T-cell (primary cell): ENCODE measurements at regions of chrX and their contacts with region 1.

Region 1: DNA sequence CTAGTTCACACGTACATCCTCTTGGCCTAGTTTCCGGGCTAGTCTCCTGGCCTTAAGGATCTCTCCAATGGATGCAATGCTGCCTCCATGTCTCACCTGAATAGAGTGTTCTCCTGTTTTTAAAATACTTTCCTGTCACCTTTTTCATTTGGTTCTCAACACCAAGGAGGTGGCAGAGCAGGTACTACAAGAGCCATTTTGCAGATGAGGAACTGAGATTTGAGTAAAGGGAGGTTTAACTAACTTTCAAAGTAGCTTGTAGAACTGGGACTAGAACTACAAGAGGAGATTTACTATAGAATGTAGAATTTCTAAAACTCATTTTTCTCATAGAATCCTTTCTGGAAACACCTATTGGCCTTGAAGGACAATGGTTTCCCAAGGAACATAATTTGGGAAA is 97.6 kb upstream of the AP1S2 start:
- DNase-seq: no peak
- ATAC-seq: no peak
- H3K4me3 ChIP-seq: no peak overlapping the region
- H3K4me3 Mint-ChIP-seq: no peak overlapping the region
- H3K27ac ChIP-seq: no peak overlapping the region
- H3K27ac Mint-ChIP-seq: no peak overlapping the region
- H3K4me1 ChIP-seq: no peaks in the 10 kb centered on the region
- H3K4me1 Mint-ChIP-seq: no peaks in the 10 kb centered on the region
- H3K27me3 ChIP-seq: no peaks in the 10 kb centered on the region
- H3K27me3 Mint-ChIP-seq: peaks cover 1 to 17% of the 10 kb centered on the region in 2 donors

Region 2: DNA sequence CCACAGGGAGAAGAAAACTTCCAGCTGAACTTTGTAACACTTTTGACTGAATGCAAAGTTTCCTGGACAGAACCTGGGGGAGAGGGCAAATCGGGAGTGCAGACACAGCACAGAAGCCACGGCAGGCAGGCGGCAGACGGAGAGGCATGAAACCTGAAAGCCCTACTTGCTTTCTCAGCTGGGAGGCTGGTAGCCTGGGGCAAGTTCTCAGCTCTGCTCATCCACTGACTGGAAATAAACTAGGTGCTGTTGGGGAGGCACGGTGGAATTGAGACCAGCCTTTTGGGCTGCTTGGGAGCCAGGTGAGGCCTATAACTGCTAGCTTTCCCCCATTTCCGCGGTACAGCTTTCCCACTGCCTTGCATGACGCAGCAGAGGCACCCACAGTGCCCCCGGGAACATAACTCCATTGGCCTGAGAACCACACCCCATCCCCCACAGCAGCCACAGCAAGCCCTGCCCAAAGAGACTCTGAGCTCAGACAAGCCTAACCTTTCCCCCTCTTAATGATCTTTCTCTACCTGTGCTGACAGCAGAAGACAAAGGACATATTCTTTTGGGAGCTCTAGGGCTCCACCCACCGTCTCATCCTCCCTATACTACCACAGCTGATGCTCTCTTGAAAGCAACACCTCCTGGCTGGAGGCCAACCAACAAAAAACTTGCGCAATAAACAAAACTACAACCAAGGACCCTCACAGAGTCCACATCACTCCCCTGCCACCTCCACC is 1194.3 kb before region 1 on chrX:
- CTCF ChIA-PET with region 1: no interaction called
- POLR2A ChIA-PET with region 1: no interaction called
- DNase-seq: no peak
- ATAC-seq: no peak
- H3K4me3 ChIP-seq: no peak overlapping the region
- H3K4me3 Mint-ChIP-seq: no peak overlapping the region
- H3K27ac ChIP-seq: no peak overlapping the region
- H3K27ac Mint-ChIP-seq: no peak overlapping the region
- H3K4me1 ChIP-seq: no peaks in the 10 kb centered on the region
- H3K4me1 Mint-ChIP-seq: no peaks in the 10 kb centered on the region
- H3K27me3 ChIP-seq: no peaks in the 10 kb centered on the region
- H3K27me3 Mint-ChIP-seq: peaks cover 0 to 3% of the 10 kb centered on the region in 2 donors

Region 3: DNA sequence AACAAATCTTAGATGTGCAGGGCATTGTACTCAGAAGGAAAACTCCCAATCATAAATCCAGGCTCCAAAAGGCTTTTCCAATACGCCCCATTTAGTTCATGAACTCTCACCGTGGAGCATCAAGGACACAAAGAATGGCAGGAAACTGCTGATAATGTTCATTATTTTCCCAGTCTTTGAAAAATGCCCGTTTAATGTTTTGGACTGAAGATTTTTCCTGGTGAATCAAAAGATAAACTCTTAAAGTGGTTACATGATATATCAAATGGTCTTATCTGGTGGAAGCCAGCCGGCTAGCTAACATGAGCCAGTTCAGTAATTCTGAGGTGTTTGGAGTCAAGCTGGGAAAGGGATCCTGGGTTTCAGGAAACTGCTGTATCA is 35.5 kb before region 1 on chrX:
- CTCF ChIA-PET with region 1: no interaction called
- POLR2A ChIA-PET with region 1: interaction called in 1 of 2 experiments, 10 read pairs
- DNase-seq: no peak
- ATAC-seq: no peak
- H3K4me3 ChIP-seq: no peak overlapping the region
- H3K4me3 Mint-ChIP-seq: no peak overlapping the region
- H3K27ac ChIP-seq: no peak overlapping the region
- H3K27ac Mint-ChIP-seq: no peak overlapping the region
- H3K4me1 ChIP-seq: no peaks in the 10 kb centered on the region
- H3K4me1 Mint-ChIP-seq: peaks cover 0 to 6% (median 2%) of the 10 kb centered on the region in 3 donors
- H3K27me3 ChIP-seq: no peaks in the 10 kb centered on the region
- H3K27me3 Mint-ChIP-seq: peaks cover 4 to 38% of the 10 kb centered on the region in 2 donors